ENCODE measurements at regions of chr15 and their contacts with region 1.

Region 1: DNA sequence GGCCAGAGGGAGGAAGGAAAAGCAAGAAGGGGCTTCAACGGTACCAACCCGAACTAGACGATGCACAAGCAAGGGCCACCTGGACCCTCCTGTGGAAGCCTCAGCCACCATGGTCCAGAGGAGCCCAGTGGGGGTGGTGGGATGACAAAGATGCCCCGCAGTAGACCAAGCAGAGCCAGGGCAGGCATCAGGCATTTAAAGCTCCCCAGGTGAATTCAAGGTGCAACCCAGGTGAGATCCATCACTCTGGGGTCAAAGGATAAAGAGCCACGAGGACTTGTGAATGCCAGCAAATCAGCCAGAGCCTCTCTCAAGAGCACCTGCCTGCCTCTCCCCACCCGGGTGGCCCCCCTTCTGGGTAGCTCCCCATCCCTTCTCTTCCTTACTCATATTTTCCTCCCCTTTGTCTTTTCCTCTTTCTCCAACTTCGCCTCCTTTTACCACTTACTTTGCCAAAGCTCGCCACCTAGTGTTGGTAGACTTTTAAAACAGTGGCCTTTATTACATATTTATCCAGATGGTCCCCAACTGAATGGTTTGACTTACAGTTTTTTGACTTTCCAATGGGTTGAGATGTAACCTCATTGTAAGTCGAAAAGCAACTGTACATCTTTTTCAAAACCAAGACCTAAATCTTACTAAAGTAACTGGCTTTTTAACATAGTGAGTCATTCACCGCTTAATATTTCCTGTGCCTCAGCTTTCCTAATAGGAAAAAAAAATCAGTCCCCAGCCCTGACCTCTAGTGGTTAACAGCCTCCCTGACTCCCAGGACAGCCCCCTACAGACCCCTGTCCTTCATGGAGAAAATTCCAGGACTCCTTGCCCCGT is 18.8 kb downstream of the PLA2G4F start:
- DNase-seq: peak; percentile 22
- H3K4me3 ChIP-seq: no peak overlapping the region
- H3K27ac ChIP-seq: no peak overlapping the region
- H3K4me1 ChIP-seq: no peaks in the 10 kb centered on the region
- H3K27me3 ChIP-seq: no peaks in the 10 kb centered on the region
- CTCF ChIP-seq: peak; percentile 14

Region 2: DNA sequence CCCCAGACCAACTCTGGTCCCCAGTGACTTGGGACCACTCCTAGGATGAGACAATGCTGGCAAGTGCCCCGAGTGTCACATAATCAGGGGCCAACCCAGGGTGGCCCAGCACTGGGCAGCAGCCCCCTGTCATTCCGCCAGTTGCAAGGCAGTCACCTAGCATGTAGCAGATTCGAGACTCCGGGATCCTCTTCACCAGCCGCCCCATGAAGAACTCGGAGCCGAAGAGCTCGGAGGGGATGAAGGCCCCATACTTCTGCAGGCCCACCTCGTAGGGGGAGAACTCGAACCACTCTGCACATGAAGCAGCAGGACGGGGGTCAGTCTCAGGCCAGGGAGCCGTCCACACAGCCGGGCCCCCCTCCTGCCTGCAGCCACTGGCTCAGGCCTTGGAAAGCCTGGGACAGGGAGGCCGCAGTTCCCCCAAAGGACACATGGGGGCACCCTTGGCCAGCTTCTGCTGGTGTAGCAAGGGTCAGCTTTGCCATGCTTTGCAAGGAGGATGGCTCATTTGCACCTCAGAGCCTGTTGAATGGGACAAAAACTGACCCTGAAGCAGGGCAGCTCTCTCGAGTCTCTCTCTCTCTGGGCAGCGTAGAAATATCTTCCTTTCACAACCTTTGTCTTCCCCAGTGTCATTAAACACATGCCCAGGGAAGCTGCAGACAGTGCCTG is 148.2 kb before region 1 on chr15:
- intact Hi-C with region 1: loop called (anchors 10 kb)
- DNase-seq: peak; percentile 93
- H3K4me3 ChIP-seq: no peak overlapping the region
- H3K27ac ChIP-seq: no peak overlapping the region
- H3K4me1 ChIP-seq: no peaks in the 10 kb centered on the region
- H3K27me3 ChIP-seq: no peaks in the 10 kb centered on the region
- CTCF ChIP-seq: peak; percentile 98

Region 3: DNA sequence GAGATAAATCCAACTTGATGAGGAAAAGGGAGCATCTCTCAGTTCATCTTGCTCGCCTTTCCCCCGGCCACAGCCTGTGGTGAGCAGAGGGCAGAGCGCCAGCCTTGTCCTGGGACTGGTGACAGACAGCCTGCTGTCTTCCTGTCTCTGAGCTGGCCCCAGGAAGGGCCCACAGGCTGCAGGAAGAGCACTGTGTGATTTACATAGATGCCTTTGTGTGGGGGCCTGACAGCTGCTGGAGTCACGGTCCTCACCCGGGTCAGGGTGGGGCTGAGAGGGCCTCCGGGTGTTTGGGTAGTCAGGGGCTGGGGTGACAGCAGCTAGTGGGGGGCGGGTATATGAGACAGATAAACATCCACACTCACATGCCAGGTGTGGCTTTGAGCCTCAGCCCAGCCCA is 72.6 kb before region 1 on chr15:
- intact Hi-C with region 1: loop called (anchors 5 kb)
- DNase-seq: peak; percentile 18
- H3K4me3 ChIP-seq: no peak overlapping the region
- H3K27ac ChIP-seq: no peak overlapping the region
- H3K4me1 ChIP-seq: no peaks in the 10 kb centered on the region
- H3K27me3 ChIP-seq: no peaks in the 10 kb centered on the region
- CTCF ChIP-seq: no peak

Region 4: DNA sequence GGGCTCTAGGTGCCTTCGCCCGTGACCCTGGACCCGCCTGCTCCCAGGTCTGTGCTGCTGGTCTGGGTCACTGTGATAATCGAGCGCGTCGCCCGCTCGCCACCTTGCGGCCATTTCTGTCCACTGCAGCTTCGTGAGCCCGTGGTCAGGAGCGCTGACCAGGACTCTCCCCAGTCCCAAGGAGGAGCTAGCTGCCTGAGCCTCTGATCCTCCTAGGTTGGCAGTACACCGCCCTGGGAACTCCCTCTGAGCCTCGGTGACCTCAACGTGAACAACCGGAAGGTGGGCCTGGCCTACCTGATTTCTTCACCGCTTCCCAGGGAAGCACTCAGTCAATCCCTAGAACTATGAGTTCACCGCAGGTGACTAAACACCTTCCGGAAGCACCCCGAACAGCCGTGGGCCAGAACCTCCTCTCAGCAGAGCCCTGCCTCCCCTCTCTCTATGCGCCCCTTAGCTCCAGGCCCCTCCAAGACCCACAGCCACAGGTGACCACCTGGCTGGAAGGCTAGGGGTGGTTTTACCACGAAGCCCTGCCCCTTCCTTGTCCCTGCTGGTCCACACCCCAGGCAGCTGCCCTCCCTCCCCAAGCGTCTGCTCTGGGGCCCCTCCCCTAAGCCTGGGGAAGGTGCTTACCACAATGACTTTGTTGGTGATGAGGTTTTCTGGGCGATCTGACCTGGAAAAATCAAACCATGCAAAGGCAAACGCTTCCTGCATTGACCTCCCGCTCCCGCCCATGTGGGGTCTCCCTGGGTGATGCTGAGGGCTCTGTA is 53.0 kb before region 1 on chr15:
- intact Hi-C with region 1: loop called (anchors 5 kb)
- DNase-seq: peak; percentile 82
- H3K4me3 ChIP-seq: no peak overlapping the region
- H3K27ac ChIP-seq: peak overlapping the region; percentile 10
- H3K4me1 ChIP-seq: peaks cover 4% of the 10 kb centered on the region
- H3K27me3 ChIP-seq: no peaks in the 10 kb centered on the region
- CTCF ChIP-seq: peak; percentile 91

Measured in colonic mucosa (tissue), 4 donors.